ENCODE measurements at regions of chr12 and their contacts with region 1.

Region 1: GRCh38 chr12:7108796-7109571 is at the start of gene C1RL:
- DNase-seq: peak; percentile 90
- ATAC-seq: peak; percentile 20
- H3K4me3 Mint-ChIP-seq: peak within 1 kb of the TSS; percentile 96
- H3K27ac Mint-ChIP-seq: peak within 1 kb of the TSS; percentile 95
- H3K4me1 Mint-ChIP-seq: peaks cover 39% of the 10 kb centered on the region
- H3K27me3 Mint-ChIP-seq: no peaks in the 10 kb centered on the region
- total RNA-seq, gene C1RL: 29.8 to 36.0 TPM

Region 2: GRCh38 chr12:6959058-6959804 is 149.8 kb before region 1 on chr12:
- POLR2A ChIA-PET with region 1: interaction called, 16 read pairs
- DNase-seq: peak; percentile 66
- ATAC-seq: peak; percentile 57
- H3K4me3 Mint-ChIP-seq: peak overlapping the region; percentile 89
- H3K27ac Mint-ChIP-seq: peak overlapping the region; percentile 100
- H3K4me1 Mint-ChIP-seq: peaks cover 68% of the 10 kb centered on the region
- H3K27me3 Mint-ChIP-seq: no peaks in the 10 kb centered on the region

Region 3: DNA sequence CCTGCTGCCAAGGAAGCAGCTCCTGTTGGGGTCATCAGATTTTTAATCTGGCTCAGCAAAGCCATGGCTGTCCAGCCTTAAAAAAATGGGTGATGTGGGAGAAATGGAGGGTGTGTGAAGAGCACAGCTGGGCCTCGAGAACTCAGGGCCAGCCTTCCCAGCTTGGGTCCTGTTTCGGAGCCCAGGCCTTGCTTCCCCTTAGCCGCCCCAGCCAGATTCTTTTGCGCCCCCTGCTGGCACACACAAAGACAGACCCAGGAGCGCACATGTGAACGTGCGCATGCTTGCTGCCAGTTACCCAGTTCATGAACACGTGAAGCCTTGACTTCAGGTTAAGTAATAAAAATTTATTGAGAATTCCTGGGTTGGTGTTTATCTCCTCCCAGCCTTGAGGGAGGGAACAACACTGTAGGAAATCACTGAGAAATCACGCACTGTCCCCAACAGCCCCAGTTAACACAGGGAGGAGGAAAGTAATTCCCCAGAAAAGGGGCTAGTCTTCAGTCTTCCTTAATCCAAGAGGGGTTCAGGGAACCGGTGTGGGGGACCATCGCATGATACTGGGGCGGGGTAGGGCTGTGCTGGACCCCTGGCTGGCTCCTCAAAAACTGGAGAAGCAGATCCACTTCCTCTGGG is 143.8 kb before region 1 on chr12:
- POLR2A ChIA-PET with region 1: interaction called, 10 read pairs
- DNase-seq: peak; percentile 85
- ATAC-seq: peak; percentile 61
- H3K4me3 Mint-ChIP-seq: no peak overlapping the region
- H3K27ac Mint-ChIP-seq: peak overlapping the region; percentile 51
- H3K4me1 Mint-ChIP-seq: peaks cover 46% of the 10 kb centered on the region
- H3K27me3 Mint-ChIP-seq: no peaks in the 10 kb centered on the region

Region 4: DNA sequence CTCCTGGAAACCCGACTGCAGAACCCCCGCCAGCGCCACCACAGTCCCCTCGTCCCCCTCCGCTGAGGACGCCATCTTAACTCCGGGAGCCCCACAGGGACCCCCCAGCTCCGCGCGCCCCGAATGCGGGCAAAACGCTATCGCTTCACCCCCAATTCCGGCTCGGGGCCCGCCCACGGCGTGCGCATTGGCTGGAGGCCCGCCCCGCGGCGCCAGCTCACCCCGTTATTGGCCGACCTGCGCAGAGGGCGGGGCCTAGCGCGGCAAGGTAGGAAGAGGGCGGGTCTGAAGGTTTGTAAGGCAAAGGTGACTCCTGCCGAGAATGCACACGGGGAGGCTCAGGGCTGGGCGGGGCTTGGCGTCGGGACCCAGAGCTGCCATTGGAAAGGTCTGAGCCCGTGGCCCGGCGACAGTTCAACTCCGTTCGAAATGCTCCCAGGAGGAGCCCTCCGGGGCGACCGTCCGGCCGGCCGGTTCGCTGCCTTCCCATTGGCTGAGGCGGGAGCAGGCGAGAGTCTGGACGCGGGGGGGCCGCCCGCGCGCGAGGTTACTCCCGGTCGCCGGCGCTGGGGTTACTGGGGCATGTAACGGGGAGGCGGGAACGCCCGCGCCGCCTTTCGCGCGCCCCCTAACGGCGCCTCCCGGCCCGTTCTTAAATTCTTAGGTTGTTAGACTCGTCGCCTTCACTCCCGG is 90.5 kb before region 1 on chr12 and contains the start of gene LPCAT3:
- POLR2A ChIA-PET with region 1: interaction called, 10 read pairs
- DNase-seq: peak; percentile 99
- ATAC-seq: peak; percentile 96
- H3K4me3 Mint-ChIP-seq: peak within 1 kb of the TSS; percentile 98
- H3K27ac Mint-ChIP-seq: peak within 1 kb of the TSS; percentile 87
- H3K4me1 Mint-ChIP-seq: peaks cover 16% of the 10 kb centered on the region
- H3K27me3 Mint-ChIP-seq: no peaks in the 10 kb centered on the region
- total RNA-seq, gene LPCAT3: 30.3 to 33.9 TPM

Region 5: GRCh38 chr12:7092229-7092985 is 16.6 kb before region 1 on chr12 and contains the start of gene C1R:
- POLR2A ChIA-PET with region 1: interaction called, 17 read pairs
- DNase-seq: peak; percentile 74
- ATAC-seq: peak; percentile 63
- H3K4me3 Mint-ChIP-seq: peak within 1 kb of the TSS; percentile 87
- H3K27ac Mint-ChIP-seq: peak within 1 kb of the TSS; percentile 80
- H3K4me1 Mint-ChIP-seq: peaks cover 7% of the 10 kb centered on the region
- H3K27me3 Mint-ChIP-seq: no peaks in the 10 kb centered on the region
- total RNA-seq, gene C1R: 4.6 to 6.4 TPM

Region 6: GRCh38 chr12:7638760-7639555 is 530.0 kb after region 1 on chr12:
- POLR2A ChIA-PET with region 1: interaction called, 10 read pairs
- DNase-seq: peak; percentile 50
- ATAC-seq: peak; percentile 75
- H3K4me3 Mint-ChIP-seq: peak overlapping the region; percentile 78
- H3K27ac Mint-ChIP-seq: peak overlapping the region; percentile 88
- H3K4me1 Mint-ChIP-seq: peaks cover 22% of the 10 kb centered on the region
- H3K27me3 Mint-ChIP-seq: peaks cover 3% of the 10 kb centered on the region

Measured in activated naive CD8-positive, alpha-beta T cell treated with anti-CD3 and anti-CD28 coated beads, Interleukin-2, amount 10 ng/mL, durations not matched to agents 7 days and 5 days (primary cell).